Left ventricle myocardium superior (tissue), 1 donor: ENCODE measurements at regions of chr5 and their contacts with region 1.

Region 1: DNA sequence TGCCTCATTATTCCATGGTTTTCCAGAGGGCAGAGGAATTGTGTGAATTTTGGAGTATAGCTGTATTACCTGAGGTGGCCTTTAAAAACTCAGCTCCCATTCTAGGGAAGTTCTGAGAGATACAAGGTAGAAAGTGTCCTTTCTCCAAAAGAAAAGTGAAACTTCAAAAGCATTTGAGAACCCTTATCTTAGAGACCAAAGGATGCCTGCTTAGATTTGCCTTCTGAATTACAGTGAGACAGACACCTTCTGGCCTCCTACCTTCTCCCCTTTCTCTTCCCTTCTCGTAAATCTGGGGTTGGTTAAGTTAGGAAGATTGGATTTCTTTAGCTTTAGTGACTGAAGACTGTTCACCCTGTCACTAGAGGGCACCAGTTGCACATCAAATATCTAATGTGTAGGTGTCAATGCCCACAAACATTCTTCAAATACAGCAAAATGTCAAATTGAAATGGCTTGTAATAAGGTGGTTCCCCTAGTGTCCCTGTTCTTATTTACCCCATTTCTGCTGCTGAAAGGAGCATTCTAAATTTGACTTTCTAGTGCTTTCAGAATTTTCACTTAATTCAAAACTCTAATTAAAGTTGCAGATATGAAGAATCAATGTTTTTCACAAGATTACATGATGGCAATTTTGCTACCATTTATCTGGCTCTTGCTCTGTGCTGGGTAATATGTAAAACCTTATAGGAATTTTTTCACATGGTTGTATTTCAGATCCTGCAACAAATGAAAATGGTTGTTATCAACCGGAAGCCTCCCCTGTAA is 46.7 kb downstream of the PRRC1 start:
- DNase-seq: no peak
- ATAC-seq: peak; percentile 69

Region 2: GRCh38 chr5:127498548-127498947 is 65.6 kb before region 1 on chr5:
- intact Hi-C with region 1: no loop called
- DNase-seq: no peak
- ATAC-seq: no peak

Region 3: GRCh38 chr5:128201065-128201926 is 637.1 kb after region 1 on chr5:
- intact Hi-C with region 1: loop called (anchors 2 kb)
- DNase-seq: peak; percentile 89
- ATAC-seq: peak; percentile 91